Activated T-helper 1 cell treated with anti-CD3 and anti-CD28 coated beads, Interleukin-12 subunit alpha, Interleukin-12 subunit beta, Interleukin-2, Interleukin-4 antibody, amounts not matched to agents 30 ng/mL and 10 ng/mL and 1 ng/mL, durations not matched to agents 14 hours and 24 hours and 36 hours (primary cell): ENCODE measurements at regions of chr11 and their contacts with region 1.

Region 1: DNA sequence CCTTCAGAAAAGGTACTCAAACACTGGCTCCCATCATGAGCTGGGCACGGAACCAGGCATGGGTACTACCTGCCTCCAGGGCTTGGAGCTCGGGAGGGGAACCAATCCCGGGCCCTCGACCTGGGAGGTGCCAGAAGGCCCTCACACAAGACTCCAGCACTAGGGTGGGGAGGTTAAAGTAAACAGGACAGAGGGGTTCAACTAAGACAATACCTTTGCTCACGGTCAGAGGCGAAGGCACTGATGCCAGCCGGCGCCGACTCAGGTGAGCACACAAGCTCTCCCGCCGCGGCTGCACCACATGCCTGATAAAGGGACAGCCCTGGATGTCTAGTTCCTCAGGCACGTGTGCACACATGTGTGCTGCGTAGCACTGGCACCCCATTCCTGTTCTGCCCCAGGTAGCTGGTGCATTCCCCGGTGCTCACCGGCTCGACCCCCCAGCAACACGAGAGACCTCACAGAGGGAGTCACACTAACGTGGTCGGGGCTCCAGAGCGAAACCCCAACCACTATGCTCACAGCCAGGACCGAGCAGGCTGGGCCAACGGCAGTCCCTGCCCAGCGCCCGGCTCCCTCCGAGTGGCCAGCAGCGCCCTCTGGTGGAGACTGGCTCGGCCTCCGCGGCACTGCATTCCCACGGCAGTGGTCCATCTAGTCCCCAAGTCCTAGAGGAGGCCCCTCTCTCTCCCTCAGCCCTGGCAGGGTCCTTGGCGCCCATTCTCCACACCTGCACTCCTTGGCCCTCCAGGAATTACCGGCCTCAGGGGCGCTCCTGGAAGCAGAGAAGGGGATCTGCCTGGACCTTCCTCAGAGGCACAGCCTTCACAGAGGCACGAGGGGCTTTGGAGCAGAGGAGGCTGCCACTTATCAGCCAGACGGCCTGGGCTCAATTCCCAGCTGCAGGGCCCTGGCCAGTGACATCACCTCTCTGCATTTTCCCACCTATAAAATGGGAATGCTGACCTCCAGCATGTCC is 28.8 kb upstream of the MOB2 start:
- DNase-seq: peak; percentile 43
- H3K4me3 Mint-ChIP-seq: no peak overlapping the region
- H3K27ac Mint-ChIP-seq: no peak overlapping the region
- H3K4me1 Mint-ChIP-seq: peaks cover 6% of the 10 kb centered on the region
- H3K27me3 Mint-ChIP-seq: no peaks in the 10 kb centered on the region

Region 2: GRCh38 chr11:1113405-1114201 is 401.8 kb before region 1 on chr11:
- intact Hi-C with region 1: loop called (anchors 10 kb)
- DNase-seq: no peak
- H3K4me3 Mint-ChIP-seq: no peak overlapping the region
- H3K27ac Mint-ChIP-seq: no peak overlapping the region
- H3K4me1 Mint-ChIP-seq: no peaks in the 10 kb centered on the region
- H3K27me3 Mint-ChIP-seq: no peaks in the 10 kb centered on the region

Region 3: GRCh38 chr11:1202776-1203504 is 312.4 kb before region 1 on chr11:
- intact Hi-C with region 1: loop called (anchors 1 kb)
- DNase-seq: peak; percentile 49
- H3K4me3 Mint-ChIP-seq: no peak overlapping the region
- H3K27ac Mint-ChIP-seq: no peak overlapping the region
- H3K4me1 Mint-ChIP-seq: no peaks in the 10 kb centered on the region
- H3K27me3 Mint-ChIP-seq: no peaks in the 10 kb centered on the region